CD8-positive, alpha-beta T cell (primary cell): ENCODE measurements at regions of chr7 and their contacts with region 1.

Region 1: DNA sequence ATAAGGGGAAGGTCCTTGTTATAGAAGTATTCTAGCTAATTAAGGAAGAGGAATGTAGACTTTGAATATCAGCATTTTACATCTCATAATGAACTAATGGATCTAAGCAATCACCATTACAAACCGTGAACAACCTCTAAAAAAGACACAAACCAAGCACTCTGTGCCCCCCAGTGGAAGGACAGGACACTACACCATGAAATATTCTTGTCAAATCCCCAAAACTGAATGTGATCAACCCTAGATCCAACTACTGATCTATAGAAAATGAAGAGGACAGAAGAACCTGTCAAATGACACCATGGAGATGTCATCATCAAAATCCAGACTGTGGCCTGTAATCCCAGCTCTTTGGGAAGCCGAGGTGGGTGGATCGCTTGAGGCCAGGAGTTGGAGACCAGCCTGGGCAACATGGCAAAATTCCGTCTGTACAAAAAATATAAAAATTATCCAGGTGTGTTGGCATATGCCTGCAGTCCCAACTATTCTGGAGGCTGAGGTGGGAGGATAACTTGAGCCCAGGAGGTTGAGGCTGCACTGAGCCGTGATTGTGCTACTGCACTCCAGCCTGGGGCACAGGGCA is 111.3 kb upstream of the CARD11 start:
- DNase-seq: peak; percentile 27 to 79 (median 66)
- ATAC-seq: peak; percentile 89
- H3K4me3 ChIP-seq: no peak overlapping the region
- H3K4me3 Mint-ChIP-seq: no peak overlapping the region
- H3K27ac ChIP-seq: no peak overlapping the region
- H3K27ac Mint-ChIP-seq: no peak overlapping the region
- H3K4me1 ChIP-seq: peaks cover 12% of the 10 kb centered on the region
- H3K4me1 Mint-ChIP-seq: peaks cover 13% of the 10 kb centered on the region
- H3K27me3 ChIP-seq: no peaks in the 10 kb centered on the region
- H3K27me3 Mint-ChIP-seq: no peaks in the 10 kb centered on the region
- CTCF ChIP-seq: peak; percentile 89

Region 2: GRCh38 chr7:2876031-2876731 is 278.8 kb before region 1 on chr7:
- CTCF ChIA-PET with region 1: interaction called, 10 read pairs
- POLR2A ChIA-PET with region 1: no interaction called
- intact Hi-C with region 1: no loop called
- DNase-seq: no peak
- ATAC-seq: no peak
- H3K4me3 ChIP-seq: no peak overlapping the region
- H3K4me3 Mint-ChIP-seq: no peak overlapping the region
- H3K27ac ChIP-seq: no peak overlapping the region
- H3K27ac Mint-ChIP-seq: no peak overlapping the region
- H3K4me1 ChIP-seq: peaks cover 23% of the 10 kb centered on the region
- H3K4me1 Mint-ChIP-seq: peaks cover 42% of the 10 kb centered on the region
- H3K27me3 ChIP-seq: no peaks in the 10 kb centered on the region
- H3K27me3 Mint-ChIP-seq: no peaks in the 10 kb centered on the region
- CTCF ChIP-seq: no peak

Region 3: GRCh38 chr7:2894118-2894940 is 260.7 kb before region 1 on chr7:
- CTCF ChIA-PET with region 1: interaction called, 33 read pairs
- POLR2A ChIA-PET with region 1: no interaction called
- intact Hi-C with region 1: no loop called
- DNase-seq: peak in 8 of 9 experiments; percentile 16 to 77 (median 50)
- ATAC-seq: peak; percentile 73
- H3K4me3 ChIP-seq: peak overlapping the region; percentile 49
- H3K4me3 Mint-ChIP-seq: peak overlapping the region; percentile 86
- H3K27ac ChIP-seq: peak overlapping the region in 1 of 2 experiments; percentile 28
- H3K27ac Mint-ChIP-seq: peak overlapping the region; percentile 87
- H3K4me1 ChIP-seq: peaks cover 13% of the 10 kb centered on the region
- H3K4me1 Mint-ChIP-seq: peaks cover 24% of the 10 kb centered on the region
- H3K27me3 ChIP-seq: no peaks in the 10 kb centered on the region
- H3K27me3 Mint-ChIP-seq: no peaks in the 10 kb centered on the region
- CTCF ChIP-seq: no peak

Region 4: DNA sequence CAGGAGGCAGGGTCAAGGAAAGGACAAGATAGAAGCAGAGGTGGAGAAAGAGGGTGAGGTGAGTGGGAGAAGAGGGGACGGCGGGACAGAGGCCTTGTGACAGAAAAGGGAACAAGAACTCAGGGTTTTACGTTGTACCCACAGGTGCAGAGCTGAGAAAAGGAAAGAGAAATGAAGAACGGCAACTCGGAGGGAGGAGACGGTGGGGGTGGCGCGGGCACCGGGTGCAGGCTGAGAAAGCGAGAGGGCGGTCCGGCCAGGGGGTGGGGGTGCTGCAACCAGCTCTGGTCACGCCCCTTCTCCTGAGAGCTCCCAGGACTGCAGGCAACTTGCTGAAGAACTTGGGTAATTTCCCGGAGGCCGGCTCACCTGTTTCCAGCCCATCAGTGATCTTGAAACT is 176.6 kb before region 1 on chr7:
- CTCF ChIA-PET with region 1: interaction called, 10 read pairs
- POLR2A ChIA-PET with region 1: no interaction called
- intact Hi-C with region 1: no loop called
- DNase-seq: peak; percentile 19 to 90 (median 71)
- ATAC-seq: peak; percentile 62
- H3K4me3 ChIP-seq: peak overlapping the region; percentile 40
- H3K4me3 Mint-ChIP-seq: peak overlapping the region; percentile 85
- H3K27ac ChIP-seq: peak overlapping the region; percentile 34 to 81
- H3K27ac Mint-ChIP-seq: peak overlapping the region; percentile 95
- H3K4me1 ChIP-seq: peaks cover 60% of the 10 kb centered on the region
- H3K4me1 Mint-ChIP-seq: peaks cover 70% of the 10 kb centered on the region
- H3K27me3 ChIP-seq: no peaks in the 10 kb centered on the region
- H3K27me3 Mint-ChIP-seq: no peaks in the 10 kb centered on the region
- CTCF ChIP-seq: no peak

Region 5: GRCh38 chr7:3065724-3066143 is 89.3 kb before region 1 on chr7:
- CTCF ChIA-PET with region 1: interaction called, 74 read pairs
- POLR2A ChIA-PET with region 1: interaction called, 5 read pairs
- intact Hi-C with region 1: loop called (anchors 1 kb)
- DNase-seq: peak; percentile 28 to 84 (median 65)
- ATAC-seq: peak; percentile 45
- H3K4me3 ChIP-seq: no peak overlapping the region
- H3K4me3 Mint-ChIP-seq: peak overlapping the region; percentile 55
- H3K27ac ChIP-seq: peak overlapping the region in 1 of 2 experiments; percentile 83
- H3K27ac Mint-ChIP-seq: peak overlapping the region; percentile 85
- H3K4me1 ChIP-seq: peaks cover 86% of the 10 kb centered on the region
- H3K4me1 Mint-ChIP-seq: peaks cover 80% of the 10 kb centered on the region
- H3K27me3 ChIP-seq: no peaks in the 10 kb centered on the region
- H3K27me3 Mint-ChIP-seq: no peaks in the 10 kb centered on the region
- CTCF ChIP-seq: peak; percentile 61

Region 6: GRCh38 chr7:3092468-3092867 is 62.5 kb before region 1 on chr7:
- CTCF ChIA-PET with region 1: interaction called, 32 read pairs
- POLR2A ChIA-PET with region 1: no interaction called
- intact Hi-C with region 1: loop called (anchors 2 kb)
- DNase-seq: peak; percentile 33 to 94 (median 73)
- ATAC-seq: peak; percentile 82
- H3K4me3 ChIP-seq: peak overlapping the region; percentile 15 to 31
- H3K4me3 Mint-ChIP-seq: peak overlapping the region; percentile 55
- H3K27ac ChIP-seq: peak overlapping the region; percentile 56 to 96
- H3K27ac Mint-ChIP-seq: peak overlapping the region; percentile 96
- H3K4me1 ChIP-seq: peaks cover 74% of the 10 kb centered on the region
- H3K4me1 Mint-ChIP-seq: peaks cover 74% of the 10 kb centered on the region
- H3K27me3 ChIP-seq: no peaks in the 10 kb centered on the region
- H3K27me3 Mint-ChIP-seq: no peaks in the 10 kb centered on the region
- CTCF ChIP-seq: no peak